Heart right ventricle (tissue), 16 donors: ENCODE measurements at regions of chr4 and their contacts with region 1.

Region 1: DNA sequence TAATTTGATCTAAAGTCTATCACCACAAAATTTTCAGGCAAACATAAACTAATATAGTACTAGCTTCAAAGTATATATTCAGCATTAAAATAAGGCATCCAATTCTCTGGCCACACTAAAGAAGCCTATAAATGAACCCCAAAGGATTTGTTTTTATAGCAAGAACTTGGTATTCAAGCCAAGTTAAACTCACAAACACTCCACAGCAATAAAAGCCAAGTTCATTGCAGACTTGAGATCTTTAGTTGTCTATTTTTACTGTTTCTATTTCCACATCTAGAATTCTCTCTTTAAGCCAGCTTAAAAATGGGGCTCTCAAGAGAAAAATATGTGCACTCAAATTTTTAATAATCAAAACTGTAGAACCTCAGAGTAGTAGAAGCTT is 51.1 kb downstream of the WDFY3 start:
- DNase-seq: no peak
- ATAC-seq: peak in 2 of 8 donors; percentile 18 to 24
- H3K4me3 ChIP-seq: no peak overlapping the region
- H3K27ac ChIP-seq: peak overlapping the region in 3 of 10 donors; percentile 3 to 54 (median 22)
- H3K4me1 ChIP-seq: peaks cover 0 to 64% (median 47%) of the 10 kb centered on the region in 9 donors
- H3K27me3 ChIP-seq: no peaks in the 10 kb centered on the region
- CTCF ChIP-seq: no peak

Region 2: DNA sequence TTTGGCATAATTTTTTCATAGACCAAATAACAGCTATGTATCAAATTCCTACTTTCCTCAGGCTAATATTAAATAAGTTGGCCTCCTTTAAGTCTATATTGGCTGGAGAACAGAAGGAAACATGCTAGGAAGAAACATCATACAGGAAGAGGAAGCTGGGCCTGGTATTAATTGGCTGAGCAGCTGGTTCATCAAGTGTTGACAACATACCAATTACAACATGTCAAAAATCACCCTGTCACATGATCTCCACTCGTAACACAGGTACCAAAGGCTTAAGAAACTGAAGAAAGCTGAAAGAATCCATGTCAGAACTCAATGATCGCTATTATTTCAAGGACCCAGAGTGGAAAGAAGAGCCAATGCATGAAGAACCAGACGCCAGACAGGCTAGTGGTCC is 40.6 kb after region 1 on chr4:
- intact Hi-C with region 1: loop called in 1 of 10 experiments (anchors 5 kb)
- DNase-seq: no peak
- ATAC-seq: peak in 3 of 8 donors; percentile 25 to 41 (median 40)
- H3K4me3 ChIP-seq: no peak overlapping the region
- H3K27ac ChIP-seq: peak overlapping the region in 2 of 10 donors; percentile 11 to 37
- H3K4me1 ChIP-seq: peaks cover 0 to 81% (median 61%) of the 10 kb centered on the region in 9 donors
- H3K27me3 ChIP-seq: no peaks in the 10 kb centered on the region
- CTCF ChIP-seq: no peak